Vagina (tissue), 2 donors: ENCODE measurements at regions of chr3 and their contacts with region 1.

Region 1: DNA sequence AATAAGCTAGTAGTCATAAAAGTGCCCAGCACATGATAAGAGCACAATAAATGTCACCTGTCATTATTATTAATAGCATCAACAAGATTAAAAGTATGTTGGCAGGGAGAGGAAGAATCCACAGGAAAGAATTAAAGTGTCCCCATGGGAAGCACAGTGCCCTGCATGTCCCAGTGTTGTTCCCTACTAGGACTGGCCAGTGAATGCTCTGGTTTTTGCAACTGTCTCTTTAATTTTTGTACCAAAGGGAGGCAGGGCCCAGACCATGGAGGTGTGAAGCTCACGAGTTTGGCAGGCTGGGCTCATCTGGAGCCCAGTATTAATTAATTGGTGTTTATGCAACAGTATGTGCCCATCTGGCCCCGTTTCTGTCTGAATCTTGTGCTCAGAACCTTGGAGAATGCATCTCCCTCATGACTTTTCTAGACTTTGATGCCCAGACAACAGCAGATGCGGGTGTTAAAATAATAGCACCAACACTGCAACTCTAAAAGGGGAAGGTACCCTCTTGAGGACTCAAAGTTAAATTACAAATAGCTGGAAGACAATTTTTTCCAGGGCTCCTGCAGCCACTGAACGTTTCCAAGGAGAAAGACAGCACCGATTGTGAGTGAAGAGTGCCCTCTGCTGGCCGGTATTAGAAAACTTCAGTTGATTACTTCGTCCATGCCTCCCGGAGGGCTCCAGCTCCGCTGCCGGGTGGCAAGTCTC is 71.9 kb upstream of the SPATA12 start:
- DNase-seq: no peak
- H3K4me3 ChIP-seq: no peak overlapping the region
- H3K27ac ChIP-seq: no peak overlapping the region
- H3K4me1 ChIP-seq: peaks cover 30% of the 10 kb centered on the region
- H3K27me3 ChIP-seq: no peaks in the 10 kb centered on the region
- CTCF ChIP-seq: peak; percentile 74 to 88 (median 86)
- POLR2A ChIP-seq: no peak

Region 2: DNA sequence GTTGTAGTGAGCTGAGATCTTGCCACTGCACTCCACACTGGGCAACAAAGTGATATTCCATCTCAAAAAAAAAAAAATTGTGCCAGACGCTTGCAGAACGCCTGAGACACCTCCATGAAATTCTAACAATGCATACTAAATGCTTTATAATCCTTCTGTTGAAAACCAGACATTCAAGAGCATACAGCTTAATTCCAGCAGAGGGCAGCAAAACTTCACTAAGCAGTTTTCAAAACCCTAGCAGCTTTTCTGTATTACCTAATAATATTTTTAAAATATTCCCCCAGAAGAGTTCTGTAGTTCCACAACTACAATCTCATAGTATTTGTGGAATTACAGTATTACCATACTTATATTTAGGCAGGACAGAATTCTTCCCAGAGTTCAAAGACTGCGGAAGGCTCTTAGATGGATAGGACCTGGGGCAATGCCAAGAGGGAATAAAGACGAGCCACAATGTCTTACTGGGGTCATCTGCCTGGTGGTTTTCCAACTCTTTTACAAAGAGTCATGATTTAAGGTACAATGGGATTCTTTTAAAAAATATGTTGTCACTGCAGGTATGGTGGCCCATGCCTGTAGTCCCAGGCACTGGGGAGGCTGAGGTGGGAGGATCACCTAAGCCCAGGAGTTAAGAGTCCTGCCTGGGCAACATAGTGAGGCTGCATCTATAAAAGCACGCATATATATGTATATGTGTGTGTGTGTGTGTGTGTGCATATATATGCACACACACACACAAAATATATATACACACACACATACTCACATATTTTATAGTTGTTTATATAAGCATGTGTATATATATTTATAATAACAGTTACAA is 285.9 kb before region 1 on chr3:
- intact Hi-C with region 1: loop called (anchors 5 kb)
- DNase-seq: no peak
- H3K4me3 ChIP-seq: no peak overlapping the region
- H3K27ac ChIP-seq: no peak overlapping the region
- H3K4me1 ChIP-seq: no peaks in the 10 kb centered on the region
- H3K27me3 ChIP-seq: no peaks in the 10 kb centered on the region
- CTCF ChIP-seq: peak; percentile 89 to 90 (median 90)
- POLR2A ChIP-seq: no peak

Region 3: GRCh38 chr3:56801662-56802377 is 186.8 kb before region 1 on chr3 and contains the start of gene ARHGEF3:
- intact Hi-C with region 1: loop called (anchors 5 kb)
- DNase-seq: no peak
- H3K4me3 ChIP-seq: peak within 1 kb of the TSS; percentile 72 to 76
- H3K27ac ChIP-seq: peak within 1 kb of the TSS; percentile 70
- H3K4me1 ChIP-seq: peaks cover 46% of the 10 kb centered on the region
- H3K27me3 ChIP-seq: no peaks in the 10 kb centered on the region
- CTCF ChIP-seq: peak in 1 of 3 experiments; percentile 45
- POLR2A ChIP-seq: peak in 1 of 2 donors; percentile 67
- total RNA-seq, gene ARHGEF3: 17.4 TPM